Sigmoid colon (tissue), 7 donors: ENCODE measurements at regions of chr14 and their contacts with region 1.

Region 1: DNA sequence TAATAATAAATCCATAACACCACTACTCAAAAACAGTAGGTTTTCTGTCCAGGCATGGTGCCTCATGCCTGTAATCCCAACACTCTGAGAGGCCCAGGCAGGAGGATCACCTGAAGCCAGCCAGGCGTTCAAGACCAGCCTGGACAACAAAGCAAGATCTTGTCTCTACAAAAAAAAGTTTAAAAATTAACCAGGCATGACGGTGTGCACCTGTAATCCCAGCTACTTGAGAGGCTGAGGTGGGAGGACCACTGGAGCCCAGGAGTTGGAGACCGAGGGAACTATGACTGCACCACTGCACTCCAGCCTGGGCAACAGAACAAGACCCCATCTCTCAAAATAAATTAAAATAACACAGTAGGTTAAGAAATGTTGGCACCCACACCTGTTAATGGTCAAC is 44.5 kb upstream of the AP4S1 start:
- DNase-seq: no peak
- H3K4me3 ChIP-seq: no peak overlapping the region
- H3K27ac ChIP-seq: peak overlapping the region in 1 of 4 donors; percentile 17
- H3K4me1 ChIP-seq: peaks cover 0 to 66% (median 40%) of the 10 kb centered on the region in 4 donors
- H3K27me3 ChIP-seq: no peaks in the 10 kb centered on the region
- CTCF ChIP-seq: no peak
- EP300 ChIP-seq: no peak
- POLR2A ChIP-seq: no peak

Region 2: GRCh38 chr14:31025367-31026075 is 44.5 kb after region 1 on chr14 and contains the start of gene AP4S1:
- intact Hi-C with region 1: loop called (anchors 2 kb)
- DNase-seq: peak; percentile 75
- H3K4me3 ChIP-seq: peak within 1 kb of the TSS; percentile 84 to 99 (median 98)
- H3K27ac ChIP-seq: peak within 1 kb of the TSS; percentile 99 to 100 (median 100)
- H3K4me1 ChIP-seq: peaks cover 0 to 39% (median 26%) of the 10 kb centered on the region in 4 donors
- H3K27me3 ChIP-seq: no peaks in the 10 kb centered on the region
- CTCF ChIP-seq: no peak
- EP300 ChIP-seq: no peak
- POLR2A ChIP-seq: no peak
- total RNA-seq, gene AP4S1: 13.8 to 29.1 (median 18.3) TPM

Region 3: GRCh38 chr14:31083781-31084180 is 102.8 kb after region 1 on chr14:
- intact Hi-C with region 1: loop called (anchors 2 kb)
- DNase-seq: no peak
- H3K4me3 ChIP-seq: no peak overlapping the region
- H3K27ac ChIP-seq: peak overlapping the region in 1 of 4 donors; percentile 62
- H3K4me1 ChIP-seq: peaks cover 0 to 5% (median 1%) of the 10 kb centered on the region in 4 donors
- H3K27me3 ChIP-seq: no peaks in the 10 kb centered on the region
- CTCF ChIP-seq: no peak
- EP300 ChIP-seq: no peak
- POLR2A ChIP-seq: no peak